ENCODE measurements at regions of chr14 and their contacts with region 1.

Region 1: DNA sequence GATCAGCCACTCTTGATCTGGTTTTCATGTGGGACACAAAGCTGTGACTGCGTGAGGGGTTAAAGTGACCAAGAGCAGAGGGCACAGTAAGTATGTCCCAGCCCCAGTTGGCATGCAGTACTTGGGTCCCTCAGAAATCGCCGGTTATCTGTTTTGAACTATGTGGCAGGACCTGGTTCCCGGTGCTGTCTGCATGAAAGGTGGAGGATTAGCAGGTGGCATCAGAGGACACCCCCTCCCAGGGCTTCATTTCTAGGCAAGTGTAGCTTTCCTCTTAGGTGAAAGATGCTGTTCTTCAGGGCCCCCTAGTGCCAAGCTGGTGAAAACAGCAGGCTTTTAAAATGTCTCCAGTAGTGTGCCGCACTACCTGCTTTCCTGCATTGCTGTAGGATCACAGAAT is 57.1 kb downstream of the ATG14 start:
- DNase-seq: peak; percentile 63
- CTCF ChIP-seq: peak; percentile 66

Region 2: DNA sequence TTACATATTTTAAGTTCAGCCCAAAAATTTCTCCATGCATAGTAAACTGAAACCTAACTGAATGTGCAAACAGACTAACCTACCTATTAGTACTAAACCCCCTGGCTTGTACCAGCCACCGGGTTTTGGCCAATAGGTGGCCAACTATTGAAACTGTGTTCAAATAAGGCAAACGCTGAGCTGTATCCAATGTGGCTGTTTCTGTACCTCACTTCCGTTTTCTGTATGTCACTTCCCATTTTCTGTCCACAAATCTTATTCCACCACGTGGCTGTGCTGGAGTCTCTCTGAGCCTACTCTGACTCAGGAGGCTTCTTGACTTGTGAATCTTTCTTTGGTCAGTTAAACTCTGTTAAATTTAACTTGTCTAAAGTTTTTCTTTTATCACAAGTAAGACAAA is 89.3 kb before region 1 on chr14:
- in situ Hi-C with region 1: loop called (anchors 10 kb)
- DNase-seq: no peak
- CTCF ChIP-seq: no peak

Region 3: DNA sequence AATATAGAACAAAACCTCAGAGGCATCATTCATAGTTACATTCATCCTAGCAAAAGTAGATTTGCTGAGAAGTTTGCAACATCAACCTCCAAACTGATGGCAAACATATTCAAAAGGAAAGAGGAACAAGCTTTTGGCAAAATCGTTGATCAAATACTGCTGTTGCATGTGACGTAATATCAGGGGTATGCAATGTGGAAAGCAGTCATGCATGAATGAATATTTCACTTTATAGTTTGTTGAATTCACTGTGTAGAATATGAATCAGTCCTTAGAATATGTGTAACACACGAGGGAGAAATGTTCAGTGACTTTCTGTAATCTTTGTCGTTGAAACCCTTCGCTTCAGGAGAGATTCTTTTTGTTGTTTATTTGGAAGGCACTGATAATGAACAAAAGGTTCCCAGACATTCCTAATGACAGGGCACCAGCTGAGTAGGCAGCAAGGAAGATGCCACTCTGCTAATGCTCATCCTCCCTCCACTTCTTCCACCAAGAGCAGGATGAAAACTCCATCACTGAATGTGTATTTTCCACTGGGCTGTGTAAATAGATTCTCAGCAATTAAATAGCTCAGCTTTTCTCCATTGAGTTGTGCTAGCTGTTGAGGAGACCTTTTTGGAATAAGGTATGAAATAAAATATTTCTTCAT is 889.8 kb after region 1 on chr14:
- in situ Hi-C with region 1: no loop called
- DNase-seq: no peak
- CTCF ChIP-seq: no peak